ENCODE measurements at regions of chrX and their contacts with region 1.

Region 1: GRCh38 chrX:100768679-100769338 is 36.9 kb upstream of the SYTL4 start:
- DNase-seq: peak; percentile 53
- H3K4me3 ChIP-seq: no peak overlapping the region
- H3K27ac ChIP-seq: no peak overlapping the region
- H3K4me1 ChIP-seq: no peaks in the 10 kb centered on the region
- H3K27me3 ChIP-seq: peaks cover 7% of the 10 kb centered on the region; the same call in 1 of the 2 replicates

Region 2: GRCh38 chrX:100512471-100512870 is 256.3 kb before region 1 on chrX:
- in situ Hi-C with region 1: loop called (anchors 25 kb)
- DNase-seq: peak; percentile 18
- H3K4me3 ChIP-seq: no peak overlapping the region
- H3K27ac ChIP-seq: no peak overlapping the region
- H3K4me1 ChIP-seq: no peaks in the 10 kb centered on the region
- H3K27me3 ChIP-seq: no peaks in the 10 kb centered on the region

Region 3: DNA sequence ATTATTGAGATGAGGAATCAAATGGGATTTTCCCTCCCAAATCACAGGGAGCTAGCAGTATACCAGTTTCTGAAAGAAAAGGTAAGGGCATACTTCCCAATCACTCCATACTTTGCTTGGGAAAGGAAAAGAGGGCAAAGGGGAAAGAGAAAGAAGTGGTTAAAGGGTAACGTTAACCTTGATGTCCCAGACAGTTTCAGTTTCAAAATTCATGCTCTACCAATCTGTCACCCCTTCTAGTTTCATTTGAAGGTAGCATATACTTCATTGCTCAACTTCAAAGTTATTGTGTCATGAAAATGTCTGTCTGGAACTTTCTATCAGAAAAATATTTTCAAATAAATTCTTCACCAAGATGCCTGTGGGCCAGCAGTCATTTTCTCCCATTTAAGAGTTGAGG is 168.1 kb before region 1 on chrX:
- in situ Hi-C with region 1: no loop called
- DNase-seq: no peak
- H3K4me3 ChIP-seq: no peak overlapping the region
- H3K27ac ChIP-seq: no peak overlapping the region
- H3K4me1 ChIP-seq: no peaks in the 10 kb centered on the region
- H3K27me3 ChIP-seq: no peaks in the 10 kb centered on the region

Region 4: GRCh38 chrX:100685284-100685996 is 83.4 kb before region 1 on chrX:
- in situ Hi-C with region 1: loop called (anchors 10 kb)
- DNase-seq: peak; percentile 74
- H3K4me3 ChIP-seq: no peak overlapping the region
- H3K27ac ChIP-seq: peak overlapping the region; percentile 64
- H3K4me1 ChIP-seq: peaks cover 18% of the 10 kb centered on the region
- H3K27me3 ChIP-seq: no peaks in the 10 kb centered on the region

Measured in GM23248 (cell line).